HepG2 (cell line): ENCODE measurements at regions of chr5 and their contacts with region 1.

Region 1: GRCh38 chr5:133051580-133052332 is at the start of gene HSPA4:
- DNase-seq: peak; percentile 97
- ATAC-seq: peak; percentile 85
- H3K4me3 ChIP-seq: peak within 1 kb of the TSS; percentile 90 to 95 (median 94)
- H3K27ac ChIP-seq: peak within 1 kb of the TSS; percentile 100
- H3K4me1 ChIP-seq: peaks cover 69% of the 10 kb centered on the region
- H3K27me3 ChIP-seq: no peaks in the 10 kb centered on the region; a peak in 1 of 5 replicates
- CTCF ChIP-seq: 0 out of 2 replicates have a peak, but pooled peaks have one; percentile 13
- EP300 ChIP-seq: no peak; a peak in 1 of 4 replicates
- POLR2A ChIP-seq: peak; percentile 91 to 97
- RAD21 ChIP-seq: peak; percentile 6
- total RNA-seq, gene HSPA4: 231 and 359 TPM in 2 replicates

Region 2: DNA sequence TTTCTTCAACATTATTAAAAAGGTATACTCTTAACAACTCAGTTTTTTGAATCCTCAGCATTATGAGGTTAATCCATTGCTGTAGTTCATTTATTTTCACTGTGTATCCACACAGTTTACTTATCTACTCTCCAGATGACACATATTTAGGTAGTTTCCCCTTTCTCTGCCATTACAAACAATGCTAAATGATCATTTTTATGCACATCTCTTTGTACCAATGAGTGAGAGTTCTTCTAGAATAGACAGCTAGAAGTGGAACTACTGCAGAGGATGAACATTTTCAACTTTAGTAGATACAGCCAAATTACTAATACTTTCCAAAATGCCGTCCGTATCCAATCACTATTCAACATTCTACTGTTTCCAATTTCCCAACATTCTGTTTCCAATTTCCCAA is 99.9 kb before region 1 on chr5:
- CTCF ChIA-PET with region 1: no interaction called
- POLR2A ChIA-PET with region 1: no interaction called
- in situ Hi-C with region 1: no loop called
- intact Hi-C with region 1: no loop called
- DNase-seq: no peak
- ATAC-seq: no peak
- H3K4me3 ChIP-seq: no peak overlapping the region
- H3K27ac ChIP-seq: no peak overlapping the region
- H3K4me1 ChIP-seq: peaks cover 41% of the 10 kb centered on the region
- H3K27me3 ChIP-seq: no peaks in the 10 kb centered on the region
- CTCF ChIP-seq: no peak
- EP300 ChIP-seq: no peak
- POLR2A ChIP-seq: no peak
- RAD21 ChIP-seq: no peak

Region 3: GRCh38 chr5:133006653-133007052 is 45.1 kb before region 1 on chr5:
- CTCF ChIA-PET with region 1: no interaction called
- POLR2A ChIA-PET with region 1: interaction called, 20 read pairs
- in situ Hi-C with region 1: no loop called
- intact Hi-C with region 1: no loop called
- DNase-seq: peak; percentile 81
- ATAC-seq: peak; percentile 66; the same call in 2 of the 3 replicates
- H3K4me3 ChIP-seq: no peak overlapping the region; a peak in 1 of 6 replicates
- H3K27ac ChIP-seq: peak overlapping the region; percentile 70
- H3K4me1 ChIP-seq: peaks cover 25% of the 10 kb centered on the region
- H3K27me3 ChIP-seq: no peaks in the 10 kb centered on the region
- CTCF ChIP-seq: no peak
- EP300 ChIP-seq: peak in 1 of 2 experiments; percentile 41; a peak in 1 of 4 replicates
- POLR2A ChIP-seq: no peak
- RAD21 ChIP-seq: no peak

Region 4: DNA sequence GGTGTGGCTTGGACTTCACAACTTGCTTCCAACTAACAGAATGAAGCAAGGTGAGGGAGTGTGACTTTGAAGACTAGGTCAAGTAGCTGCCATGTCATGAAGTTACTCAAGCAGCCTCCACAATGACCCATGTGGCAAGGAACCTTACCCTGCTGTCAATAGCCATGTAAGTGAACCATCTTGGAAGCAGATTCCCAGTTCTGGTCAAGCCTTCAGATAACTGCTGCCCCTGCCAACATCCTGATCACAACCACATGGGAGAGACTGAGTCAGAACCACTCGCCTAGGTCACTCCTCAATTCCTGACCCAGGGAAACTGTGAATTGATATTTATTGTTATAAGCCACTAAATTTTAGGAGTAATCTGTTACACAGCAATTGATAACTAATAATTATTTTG is 36.3 kb before region 1 on chr5:
- CTCF ChIA-PET with region 1: no interaction called
- POLR2A ChIA-PET with region 1: interaction called, 22 read pairs
- in situ Hi-C with region 1: no loop called
- intact Hi-C with region 1: loop called (anchors 5 kb)
- DNase-seq: no peak
- ATAC-seq: no peak
- H3K4me3 ChIP-seq: no peak overlapping the region
- H3K27ac ChIP-seq: no peak overlapping the region
- H3K4me1 ChIP-seq: peaks cover 22% of the 10 kb centered on the region
- H3K27me3 ChIP-seq: no peaks in the 10 kb centered on the region
- CTCF ChIP-seq: no peak
- EP300 ChIP-seq: no peak
- POLR2A ChIP-seq: no peak
- RAD21 ChIP-seq: no peak

Region 5: GRCh38 chr5:133025804-133026663 is 25.7 kb before region 1 on chr5 and contains the start of gene ZCCHC10:
- CTCF ChIA-PET with region 1: no interaction called
- POLR2A ChIA-PET with region 1: interaction called, 116 read pairs
- in situ Hi-C with region 1: no loop called
- intact Hi-C with region 1: loop called (anchors 1 kb)
- DNase-seq: peak; percentile 86
- ATAC-seq: peak; percentile 91
- H3K4me3 ChIP-seq: peak within 1 kb of the TSS; percentile 67 to 99 (median 98)
- H3K27ac ChIP-seq: peak within 1 kb of the TSS; percentile 92
- H3K4me1 ChIP-seq: peaks cover 53% of the 10 kb centered on the region
- H3K27me3 ChIP-seq: peaks cover 0 to 2% of the 10 kb centered on the region in 2 experiments; a peak in 1 of 5 replicates
- CTCF ChIP-seq: no peak
- EP300 ChIP-seq: no peak
- POLR2A ChIP-seq: peak; percentile 70 to 80
- RAD21 ChIP-seq: peak; percentile 24; the same call in 1 of the 2 replicates
- total RNA-seq, gene ZCCHC10: 40.7 and 54.8 TPM in 2 replicates

Region 6: GRCh38 chr5:133032852-133033742 is 18.7 kb before region 1 on chr5:
- CTCF ChIA-PET with region 1: no interaction called
- POLR2A ChIA-PET with region 1: interaction called, 116 read pairs
- in situ Hi-C with region 1: no loop called
- intact Hi-C with region 1: no loop called
- DNase-seq: peak; percentile 86
- ATAC-seq: peak; percentile 75
- H3K4me3 ChIP-seq: peak overlapping the region in 1 of 3 experiments; percentile 33; a peak in 1 of 6 replicates
- H3K27ac ChIP-seq: peak overlapping the region; percentile 41
- H3K4me1 ChIP-seq: peaks cover 87% of the 10 kb centered on the region
- H3K27me3 ChIP-seq: no peaks in the 10 kb centered on the region
- CTCF ChIP-seq: no peak
- EP300 ChIP-seq: peak in 1 of 2 experiments; percentile 18; a peak in 1 of 4 replicates
- POLR2A ChIP-seq: no peak
- RAD21 ChIP-seq: no peak

Region 7: GRCh38 chr5:133489632-133490031 is 437.9 kb after region 1 on chr5:
- CTCF ChIA-PET with region 1: no interaction called
- POLR2A ChIA-PET with region 1: no interaction called
- in situ Hi-C with region 1: no loop called
- intact Hi-C with region 1: no loop called
- DNase-seq: peak; percentile 13
- ATAC-seq: peak; percentile 57; the same call in 2 of the 3 replicates
- H3K4me3 ChIP-seq: no peak overlapping the region
- H3K27ac ChIP-seq: no peak overlapping the region
- H3K4me1 ChIP-seq: peaks cover 14% of the 10 kb centered on the region; the same call in 1 of the 2 replicates
- H3K27me3 ChIP-seq: peaks cover 0 to 21% of the 10 kb centered on the region in 2 experiments; a peak in 2 of 5 replicates
- CTCF ChIP-seq: peak; percentile 44
- EP300 ChIP-seq: no peak
- POLR2A ChIP-seq: no peak
- RAD21 ChIP-seq: no peak